ENCODE measurements at regions of chr20 and their contacts with region 1.

Region 1: DNA sequence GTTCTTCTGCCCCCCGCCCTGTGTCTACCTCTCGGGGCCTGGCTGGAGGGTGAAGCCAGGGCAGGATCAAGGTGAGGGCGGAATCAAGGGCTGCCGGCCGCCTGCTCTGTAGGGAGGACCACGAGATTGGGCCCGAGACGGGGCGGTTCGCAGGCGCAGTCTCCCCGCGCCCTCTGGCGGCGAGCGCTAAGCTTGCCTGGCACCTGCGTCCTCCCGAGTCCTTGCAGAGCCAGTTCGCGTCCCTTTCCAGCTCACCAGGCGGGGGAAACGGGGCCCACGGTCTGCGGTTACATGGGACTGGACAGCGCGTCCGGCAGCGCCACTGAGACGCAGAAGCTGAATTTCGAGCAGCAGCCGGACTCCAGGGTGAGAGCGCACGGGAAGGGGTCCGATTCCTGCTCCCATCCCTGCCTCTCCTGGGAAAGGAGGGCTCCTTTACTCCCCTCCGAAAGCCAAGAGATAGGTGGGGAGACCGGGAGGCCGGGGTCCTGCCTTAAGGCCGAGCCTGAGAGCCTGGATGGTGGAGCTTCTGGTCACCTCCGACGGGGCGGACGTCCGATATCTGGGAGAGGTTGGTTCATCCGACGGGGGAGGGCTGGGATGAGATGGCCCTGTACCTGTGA is 3.6 kb upstream of the MATN4 start:
- DNase-seq: peak; percentile 55
- H3K4me3 Mint-ChIP-seq: no peak overlapping the region
- H3K27ac Mint-ChIP-seq: no peak overlapping the region
- H3K4me1 Mint-ChIP-seq: no peaks in the 10 kb centered on the region
- H3K27me3 Mint-ChIP-seq: no peaks in the 10 kb centered on the region
- CTCF ChIP-seq: peak; percentile 80

Region 2: GRCh38 chr20:45300961-45301360 is 10.7 kb before region 1 on chr20:
- CTCF ChIA-PET with region 1: interaction called, 66 read pairs
- POLR2A ChIA-PET with region 1: interaction called, 4 read pairs
- intact Hi-C with region 1: no loop called
- DNase-seq: peak; percentile 42
- H3K4me3 Mint-ChIP-seq: no peak overlapping the region
- H3K27ac Mint-ChIP-seq: no peak overlapping the region
- H3K4me1 Mint-ChIP-seq: no peaks in the 10 kb centered on the region
- H3K27me3 Mint-ChIP-seq: no peaks in the 10 kb centered on the region
- CTCF ChIP-seq: no peak

Measured in MCF 10A (cell line).